PC-9 (cell line): ENCODE measurements at regions of chr1 and their contacts with region 1.

Region 1: DNA sequence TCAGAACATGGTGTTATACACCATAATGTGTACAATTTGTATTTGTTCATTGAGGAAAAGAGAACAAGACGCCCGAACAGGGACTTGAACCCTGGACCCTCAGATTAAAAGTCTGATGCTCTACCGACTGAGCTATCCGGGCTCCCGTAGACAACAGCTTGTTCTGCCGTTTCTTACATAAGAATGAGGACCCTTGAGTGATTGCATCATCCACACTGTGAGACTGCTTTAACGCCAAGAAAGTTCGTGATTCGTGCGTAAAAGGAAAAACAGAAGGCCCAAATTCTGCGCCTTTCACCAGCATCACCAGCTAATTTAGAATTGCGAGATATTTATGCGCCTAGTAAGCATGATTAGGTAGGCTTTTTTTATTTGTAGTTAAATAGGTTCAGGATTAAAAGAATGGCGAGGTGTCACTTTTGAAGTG is 9.2 kb upstream of the MDM4 start:
- DNase-seq: peak; percentile 87 to 88
- H3K4me3 ChIP-seq: peak overlapping the region; percentile 65
- H3K27ac ChIP-seq: peak overlapping the region; percentile 93
- H3K4me1 ChIP-seq: peaks cover 40% of the 10 kb centered on the region
- H3K27me3 ChIP-seq: no peaks in the 10 kb centered on the region
- CTCF ChIP-seq: 0 out of 2 replicates have a peak, but pooled peaks have one; percentile 11

Region 2: DNA sequence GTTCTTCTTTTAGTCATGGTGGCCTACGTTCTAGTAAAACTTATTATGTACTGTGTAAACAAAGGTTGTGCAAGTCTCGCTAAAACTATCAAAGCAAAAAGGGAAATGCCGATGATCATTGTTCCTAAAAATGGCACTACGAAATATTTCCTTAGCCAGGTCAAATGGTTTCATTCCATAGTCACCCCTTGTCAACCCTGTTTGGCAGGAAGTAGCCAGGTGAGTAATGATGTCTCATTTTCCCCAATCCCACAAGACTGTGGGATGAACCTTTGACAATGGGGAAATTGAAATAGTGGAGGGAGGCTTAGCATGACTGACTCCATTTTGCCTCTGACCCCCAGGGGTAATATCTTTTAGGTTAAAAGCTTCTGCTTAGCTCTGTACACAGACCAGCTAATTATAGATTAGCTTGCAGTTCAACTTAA is 335.2 kb before region 1 on chr1:
- CTCF ChIA-PET with region 1: no interaction called
- POLR2A ChIA-PET with region 1: no interaction called
- intact Hi-C with region 1: loop called (anchors 5 kb)
- DNase-seq: peak; percentile 68 to 99
- H3K4me3 ChIP-seq: no peak overlapping the region
- H3K27ac ChIP-seq: peak overlapping the region; percentile 88
- H3K4me1 ChIP-seq: peaks cover 53% of the 10 kb centered on the region
- H3K27me3 ChIP-seq: no peaks in the 10 kb centered on the region
- CTCF ChIP-seq: no peak

Region 3: DNA sequence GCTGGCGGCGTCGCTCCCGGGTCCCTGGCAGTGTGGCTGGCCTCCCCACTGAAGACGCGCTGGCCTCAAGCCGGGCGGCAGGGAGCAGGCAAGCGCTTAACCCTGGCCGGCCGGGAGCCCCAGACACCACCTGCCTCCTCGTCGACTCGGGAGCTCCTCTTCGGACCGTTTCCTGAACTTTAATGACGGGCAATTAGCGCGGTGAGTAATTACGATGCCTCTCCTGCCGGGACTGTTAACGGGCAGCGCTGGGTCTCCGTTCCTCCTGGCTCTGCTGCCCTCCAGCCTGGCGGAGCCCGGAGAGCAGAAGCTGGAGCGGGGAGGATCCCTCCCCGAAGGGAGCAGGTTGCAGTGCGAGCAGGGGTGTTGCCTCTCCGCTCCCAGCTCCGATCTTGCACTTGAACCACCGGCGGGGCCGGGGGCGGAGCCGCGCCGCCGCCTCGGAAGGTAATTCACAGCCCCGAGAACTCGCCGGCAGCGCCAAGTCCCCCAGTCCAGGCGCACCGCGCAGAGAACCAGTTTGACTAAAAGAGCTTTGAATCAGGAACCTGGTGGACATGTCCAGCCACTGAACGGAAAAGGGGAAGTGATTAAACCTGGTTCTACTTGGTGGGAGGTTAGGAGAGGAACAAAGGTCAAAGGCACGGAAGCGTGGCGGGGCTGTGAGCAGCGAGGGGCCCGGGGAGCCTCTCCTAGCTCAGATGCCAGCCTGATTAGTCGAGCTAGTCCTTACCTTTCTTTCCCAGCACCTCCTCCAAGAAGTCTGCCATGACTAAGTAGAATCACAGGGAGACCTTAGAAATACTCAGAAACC is 129.0 kb before region 1 on chr1:
- CTCF ChIA-PET with region 1: interaction called, 4 read pairs
- POLR2A ChIA-PET with region 1: no interaction called
- intact Hi-C with region 1: loop called (anchors 5 kb)
- DNase-seq: peak; percentile 75 to 79
- H3K4me3 ChIP-seq: peak overlapping the region; percentile 77
- H3K27ac ChIP-seq: peak overlapping the region; percentile 82
- H3K4me1 ChIP-seq: peaks cover 60% of the 10 kb centered on the region
- H3K27me3 ChIP-seq: no peaks in the 10 kb centered on the region
- CTCF ChIP-seq: peak; percentile 23; the same call in 1 of the 2 replicates

Region 4: DNA sequence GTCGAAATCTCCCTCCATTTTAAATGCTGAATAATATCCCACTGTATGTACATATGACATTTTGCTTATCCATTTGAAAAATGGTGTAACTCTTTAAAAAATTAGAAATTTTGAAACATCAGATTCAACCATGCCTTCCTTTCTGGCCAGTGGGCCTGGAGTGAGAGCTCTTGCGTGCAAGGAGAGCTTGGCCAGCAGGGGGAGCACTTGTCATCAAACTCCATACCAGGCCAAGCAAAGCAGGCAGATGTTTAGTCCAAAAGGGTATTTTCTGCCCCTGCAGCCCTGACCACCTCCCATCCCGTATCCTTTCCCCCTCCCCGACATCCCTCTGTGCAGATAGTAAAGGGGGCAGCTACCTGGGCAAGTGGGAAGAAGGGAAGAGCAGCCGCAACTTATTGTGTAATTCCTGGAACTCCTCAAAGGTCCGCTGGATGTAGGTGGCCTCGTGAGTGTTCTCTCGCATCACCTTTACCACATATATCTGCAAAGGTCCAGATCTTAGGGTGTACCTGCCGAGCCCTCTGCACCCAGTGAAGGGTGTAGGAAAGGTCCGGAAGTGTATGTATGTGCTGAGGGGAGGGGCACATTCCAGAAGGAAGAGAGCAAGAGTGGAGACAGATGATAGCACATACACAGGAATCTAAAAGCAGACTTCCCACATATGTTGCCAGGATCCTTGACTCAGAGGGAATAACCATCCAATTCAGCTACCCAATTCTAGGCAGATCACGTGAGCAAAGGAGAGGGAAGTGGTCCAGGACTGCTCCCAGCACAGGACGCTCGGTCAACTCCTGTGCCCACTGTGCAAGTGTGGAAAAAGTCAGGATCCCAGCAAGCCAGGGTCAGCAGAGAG is 75.4 kb before region 1 on chr1:
- CTCF ChIA-PET with region 1: interaction called, 7 read pairs
- POLR2A ChIA-PET with region 1: interaction called, 4 read pairs
- intact Hi-C with region 1: loop called (anchors 1 kb)
- DNase-seq: peak; percentile 58 to 73
- H3K4me3 ChIP-seq: no peak overlapping the region
- H3K27ac ChIP-seq: peak overlapping the region; percentile 35; the same call in 1 of the 2 replicates
- H3K4me1 ChIP-seq: peaks cover 45% of the 10 kb centered on the region
- H3K27me3 ChIP-seq: no peaks in the 10 kb centered on the region
- CTCF ChIP-seq: peak; percentile 95

Region 5: DNA sequence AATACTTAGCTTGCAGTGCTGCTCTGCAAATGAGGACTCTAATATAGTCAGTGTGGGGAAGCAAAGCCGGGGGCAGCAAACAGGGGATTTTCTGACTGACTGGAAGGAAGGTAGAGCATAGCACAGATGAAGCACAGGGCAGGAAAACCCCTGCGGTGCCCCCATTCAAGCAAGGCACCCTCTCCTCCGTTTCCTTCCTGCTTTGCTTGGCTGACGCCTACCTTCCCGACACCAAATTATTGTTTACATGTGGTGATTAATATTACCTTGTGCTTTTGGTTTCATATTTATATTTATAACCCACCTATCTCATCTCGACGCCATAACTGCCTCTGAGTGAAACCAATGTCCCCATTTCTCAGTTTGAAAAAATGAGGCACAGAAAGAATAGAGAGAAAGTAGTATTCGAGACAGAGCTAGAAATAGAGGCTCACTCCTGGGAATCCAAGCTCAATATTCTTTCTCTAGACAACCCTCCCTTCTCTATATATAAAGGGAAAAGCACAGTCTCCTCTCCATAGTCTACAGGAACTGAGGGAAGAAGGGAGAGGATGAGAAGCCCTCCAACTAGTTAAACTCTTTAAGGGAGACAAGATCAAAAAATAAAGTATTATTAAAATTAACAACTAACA is 53.7 kb before region 1 on chr1:
- CTCF ChIA-PET with region 1: interaction called, 11 read pairs
- POLR2A ChIA-PET with region 1: interaction called, 7 read pairs
- intact Hi-C with region 1: loop called (anchors 2 kb)
- DNase-seq: no peak
- H3K4me3 ChIP-seq: no peak overlapping the region
- H3K27ac ChIP-seq: no peak overlapping the region; the same call in 1 of the 2 replicates
- H3K4me1 ChIP-seq: peaks cover 48% of the 10 kb centered on the region
- H3K27me3 ChIP-seq: no peaks in the 10 kb centered on the region
- CTCF ChIP-seq: no peak

Region 6: GRCh38 chr1:204763706-204764427 is 256.9 kb after region 1 on chr1:
- CTCF ChIA-PET with region 1: interaction called, 4 read pairs
- POLR2A ChIA-PET with region 1: no interaction called
- intact Hi-C with region 1: loop called (anchors 5 kb)
- DNase-seq: peak; percentile 72 to 75
- H3K4me3 ChIP-seq: no peak overlapping the region
- H3K27ac ChIP-seq: no peak overlapping the region
- H3K4me1 ChIP-seq: peaks cover 6% of the 10 kb centered on the region; the same call in 1 of the 2 replicates
- H3K27me3 ChIP-seq: peaks cover 18% of the 10 kb centered on the region
- CTCF ChIP-seq: peak; percentile 82